ENCODE measurements at regions of chr4 and their contacts with region 1.

Region 1: GRCh38 chr4:109424093-109424841 is 9.3 kb upstream of the SEC24B start:
- DNase-seq: no peak
- ATAC-seq: no peak
- H3K4me3 ChIP-seq: no peak overlapping the region
- H3K27ac ChIP-seq: no peak overlapping the region
- H3K4me1 ChIP-seq: no peaks in the 10 kb centered on the region
- H3K27me3 ChIP-seq: no peaks in the 10 kb centered on the region
- CTCF ChIP-seq: no peak
- POLR2A ChIP-seq: no peak

Region 2: DNA sequence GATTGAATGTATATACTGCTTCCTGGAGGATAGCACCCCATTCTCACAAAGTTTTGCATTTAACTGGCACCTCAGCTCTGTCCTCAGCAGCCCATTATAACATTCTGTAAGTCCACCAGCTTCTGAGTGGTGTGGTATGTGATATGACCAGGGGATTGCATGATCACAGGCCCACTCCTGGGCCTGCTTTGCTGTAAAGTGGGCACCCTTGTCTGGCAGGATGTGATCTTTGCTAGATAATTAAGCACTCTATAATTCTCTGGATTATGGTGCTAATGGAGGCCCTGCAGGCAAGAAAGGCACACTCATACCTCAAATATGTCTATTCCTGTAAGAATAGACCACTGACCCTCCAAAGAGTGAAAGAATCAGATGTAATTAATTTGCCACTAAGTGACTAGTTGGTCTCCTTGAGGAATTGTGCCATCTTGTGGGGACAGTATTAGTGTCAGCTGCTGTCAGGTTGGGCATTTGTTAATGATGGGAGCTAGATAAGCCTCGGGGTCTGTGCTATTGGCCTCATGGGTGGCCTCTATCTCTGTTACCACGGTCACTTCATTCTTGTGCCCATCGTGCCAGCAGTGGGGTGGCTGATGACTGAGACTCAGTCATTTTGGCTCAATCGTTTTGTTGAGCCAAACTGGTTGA is 379.8 kb after region 1 on chr4:
- in situ Hi-C with region 1: loop called in 3 of 4 experiments (anchors 5 to 10 kb)
- intact Hi-C with region 1: no loop called
- DNase-seq: no peak
- ATAC-seq: peak; percentile 41 to 60
- H3K4me3 ChIP-seq: no peak overlapping the region
- H3K27ac ChIP-seq: no peak overlapping the region
- H3K4me1 ChIP-seq: no peaks in the 10 kb centered on the region
- H3K27me3 ChIP-seq: no peaks in the 10 kb centered on the region
- CTCF ChIP-seq: peak in 2 of 5 experiments; percentile 23 to 38
- POLR2A ChIP-seq: no peak

Region 3: GRCh38 chr4:109815151-109816081 is 391.1 kb after region 1 on chr4 and contains the start of gene GAR1:
- in situ Hi-C with region 1: loop called in 1 of 4 experiments (anchors 10 kb)
- intact Hi-C with region 1: no loop called
- DNase-seq: peak; percentile 85 to 86
- ATAC-seq: peak; percentile 99 to 100
- H3K4me3 ChIP-seq: peak within 1 kb of the TSS; percentile 70 to 99 (median 88)
- H3K27ac ChIP-seq: peak within 1 kb of the TSS; percentile 82 to 90 (median 86)
- H3K4me1 ChIP-seq: peaks cover 14 to 22% of the 10 kb centered on the region in 2 donors
- H3K27me3 ChIP-seq: no peaks in the 10 kb centered on the region
- CTCF ChIP-seq: peak in 1 of 5 experiments; percentile 9
- POLR2A ChIP-seq: peak in 1 of 2 donors; percentile 18
- total RNA-seq, gene GAR1: 2.8 to 7.2 (median 3.5) TPM

Region 4: GRCh38 chr4:109826719-109827118 is 402.5 kb after region 1 on chr4:
- in situ Hi-C with region 1: no loop called
- intact Hi-C with region 1: loop called (anchors 5 kb)
- DNase-seq: no peak
- ATAC-seq: no peak
- H3K4me3 ChIP-seq: no peak overlapping the region
- H3K27ac ChIP-seq: no peak overlapping the region
- H3K4me1 ChIP-seq: no peaks in the 10 kb centered on the region
- H3K27me3 ChIP-seq: no peaks in the 10 kb centered on the region
- CTCF ChIP-seq: peak in 3 of 5 experiments; percentile 16 to 51 (median 51)
- POLR2A ChIP-seq: no peak

Region 5: GRCh38 chr4:109977854-109978501 is 553.7 kb after region 1 on chr4:
- in situ Hi-C with region 1: loop called (anchors 10 to 25 kb)
- intact Hi-C with region 1: loop called (anchors 5 kb)
- DNase-seq: no peak
- ATAC-seq: peak in 1 of 2 donors; percentile 49
- H3K4me3 ChIP-seq: no peak overlapping the region
- H3K27ac ChIP-seq: no peak overlapping the region
- H3K4me1 ChIP-seq: no peaks in the 10 kb centered on the region
- H3K27me3 ChIP-seq: no peaks in the 10 kb centered on the region
- CTCF ChIP-seq: peak in 4 of 5 experiments; percentile 38 to 65 (median 48)
- POLR2A ChIP-seq: no peak